Activated CD4-positive, alpha-beta T cell treated with anti-CD3 and anti-CD28 coated beads for 36 hours (primary cell): ENCODE measurements at regions of chr21 and their contacts with region 1.

Region 1: GRCh38 chr21:15064576-15065391 is at the start of gene NRIP1:
- DNase-seq: peak; percentile 85
- ATAC-seq: peak; percentile 72
- H3K4me3 Mint-ChIP-seq: peak within 1 kb of the TSS; percentile 87
- H3K27ac Mint-ChIP-seq: peak within 1 kb of the TSS; percentile 94
- H3K4me1 Mint-ChIP-seq: peaks cover 44% of the 10 kb centered on the region
- H3K27me3 Mint-ChIP-seq: peaks cover 6% of the 10 kb centered on the region
- total RNA-seq, gene NRIP1: 7.3 to 7.7 TPM

Region 2: DNA sequence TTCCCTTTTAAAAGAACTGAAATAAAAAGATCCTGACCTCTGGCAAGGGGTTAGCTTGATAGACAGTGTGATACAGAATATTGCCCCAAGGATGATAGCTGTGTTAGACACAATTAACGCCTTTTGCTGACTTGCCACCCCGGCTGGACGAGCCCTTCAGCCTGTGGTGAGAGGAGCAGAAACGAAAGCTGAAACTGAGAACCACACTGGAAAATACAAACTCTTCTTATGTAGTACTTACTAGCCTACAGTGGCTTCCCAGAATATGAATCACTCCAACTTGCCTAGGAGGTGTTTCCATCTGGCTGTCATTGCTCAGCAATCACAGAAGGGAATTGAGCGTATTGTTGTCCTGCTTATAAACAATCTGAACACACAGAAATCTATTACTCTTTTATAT is 541.5 kb before region 1 on chr21:
- CTCF ChIA-PET with region 1: no interaction called
- POLR2A ChIA-PET with region 1: no interaction called
- intact Hi-C with region 1: loop called in 1 of 2 experiments (anchors 5 kb)
- DNase-seq: peak; percentile 64
- ATAC-seq: peak; percentile 79
- H3K4me3 Mint-ChIP-seq: peak overlapping the region; percentile 59
- H3K27ac Mint-ChIP-seq: peak overlapping the region; percentile 91
- H3K4me1 Mint-ChIP-seq: peaks cover 62% of the 10 kb centered on the region
- H3K27me3 Mint-ChIP-seq: no peaks in the 10 kb centered on the region

Region 3: GRCh38 chr21:15015622-15016471 is 48.9 kb before region 1 on chr21:
- CTCF ChIA-PET with region 1: no interaction called
- POLR2A ChIA-PET with region 1: no interaction called
- intact Hi-C with region 1: no loop called
- DNase-seq: no peak
- ATAC-seq: peak; percentile 78
- H3K4me3 Mint-ChIP-seq: no peak overlapping the region
- H3K27ac Mint-ChIP-seq: no peak overlapping the region
- H3K4me1 Mint-ChIP-seq: peaks cover 17% of the 10 kb centered on the region
- H3K27me3 Mint-ChIP-seq: no peaks in the 10 kb centered on the region

Region 4: GRCh38 chr21:15051644-15052458 is 12.9 kb before region 1 on chr21:
- CTCF ChIA-PET with region 1: interaction called, 4 read pairs
- POLR2A ChIA-PET with region 1: interaction called, 8 read pairs
- intact Hi-C with region 1: loop called in 1 of 2 experiments (anchors 1 kb)
- DNase-seq: no peak
- ATAC-seq: peak; percentile 89
- H3K4me3 Mint-ChIP-seq: peak overlapping the region; percentile 59
- H3K27ac Mint-ChIP-seq: peak overlapping the region; percentile 87
- H3K4me1 Mint-ChIP-seq: peaks cover 78% of the 10 kb centered on the region
- H3K27me3 Mint-ChIP-seq: no peaks in the 10 kb centered on the region

Region 5: DNA sequence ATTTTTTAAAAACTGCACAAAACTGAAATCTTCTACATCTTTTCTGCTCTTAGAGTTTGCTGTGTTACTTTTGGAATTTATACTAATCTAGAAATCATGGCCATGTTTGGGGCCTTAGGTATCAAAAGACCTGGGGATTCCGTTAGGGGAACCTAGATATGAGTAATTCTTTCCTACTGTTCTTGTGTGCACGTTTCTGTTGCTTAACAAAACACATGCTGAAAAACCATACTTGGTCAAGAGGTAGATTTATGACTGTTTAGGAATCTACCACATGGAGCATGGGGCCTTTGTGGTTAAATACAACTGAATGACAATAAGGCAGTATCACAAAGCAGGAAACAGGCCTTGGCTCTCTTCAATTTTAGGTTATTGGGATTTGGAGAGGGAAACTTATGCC is 373.1 kb after region 1 on chr21:
- CTCF ChIA-PET with region 1: no interaction called
- POLR2A ChIA-PET with region 1: no interaction called
- intact Hi-C with region 1: loop called (anchors 2 to 5 kb)
- DNase-seq: no peak
- ATAC-seq: peak; percentile 84
- H3K4me3 Mint-ChIP-seq: no peak overlapping the region
- H3K27ac Mint-ChIP-seq: no peak overlapping the region
- H3K4me1 Mint-ChIP-seq: peaks cover 19% of the 10 kb centered on the region
- H3K27me3 Mint-ChIP-seq: no peaks in the 10 kb centered on the region

Region 6: GRCh38 chr21:15592271-15592860 is 527.6 kb after region 1 on chr21:
- CTCF ChIA-PET with region 1: no interaction called
- POLR2A ChIA-PET with region 1: no interaction called
- intact Hi-C with region 1: loop called in 1 of 2 experiments (anchors 5 kb)
- DNase-seq: no peak
- ATAC-seq: no peak
- H3K4me3 Mint-ChIP-seq: no peak overlapping the region
- H3K27ac Mint-ChIP-seq: no peak overlapping the region
- H3K4me1 Mint-ChIP-seq: no peaks in the 10 kb centered on the region
- H3K27me3 Mint-ChIP-seq: peaks cover 8% of the 10 kb centered on the region

Region 7: DNA sequence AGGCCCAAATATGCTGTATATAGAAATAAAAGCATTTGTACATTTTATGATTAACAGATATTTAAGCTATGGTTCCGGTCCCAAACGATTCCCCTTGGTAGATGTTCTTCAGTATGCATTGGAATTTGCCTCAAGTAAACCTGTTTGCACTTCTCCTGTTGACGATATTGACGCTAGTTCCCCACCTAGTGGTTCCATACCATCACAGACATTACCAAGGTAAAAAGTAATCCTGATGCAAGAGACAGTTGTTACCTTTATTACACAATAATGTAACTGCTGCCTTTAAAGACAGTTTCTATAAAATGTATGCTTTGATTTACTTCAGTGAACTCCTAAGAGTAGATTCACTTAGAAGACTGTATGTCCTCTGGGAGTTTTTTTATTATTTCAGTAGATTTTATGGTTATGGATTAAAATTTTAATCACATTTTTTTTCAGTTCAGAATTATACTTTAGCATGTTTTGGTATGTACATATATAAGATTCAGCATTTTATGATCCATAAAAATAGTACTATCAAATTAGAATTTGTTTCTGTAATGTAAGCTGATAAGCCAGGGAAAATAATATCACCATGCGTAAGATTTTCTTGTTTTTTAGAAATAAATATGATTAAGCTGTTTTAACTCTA is 761.5 kb after region 1 on chr21:
- CTCF ChIA-PET with region 1: no interaction called
- POLR2A ChIA-PET with region 1: no interaction called
- intact Hi-C with region 1: loop called in 1 of 2 experiments (anchors 5 kb)
- DNase-seq: peak; percentile 32
- ATAC-seq: peak; percentile 72
- H3K4me3 Mint-ChIP-seq: no peak overlapping the region
- H3K27ac Mint-ChIP-seq: no peak overlapping the region
- H3K4me1 Mint-ChIP-seq: peaks cover 29% of the 10 kb centered on the region
- H3K27me3 Mint-ChIP-seq: no peaks in the 10 kb centered on the region